Aorta (tissue), 5 donors: ENCODE measurements at regions of chr12 and their contacts with region 1.

Region 1: DNA sequence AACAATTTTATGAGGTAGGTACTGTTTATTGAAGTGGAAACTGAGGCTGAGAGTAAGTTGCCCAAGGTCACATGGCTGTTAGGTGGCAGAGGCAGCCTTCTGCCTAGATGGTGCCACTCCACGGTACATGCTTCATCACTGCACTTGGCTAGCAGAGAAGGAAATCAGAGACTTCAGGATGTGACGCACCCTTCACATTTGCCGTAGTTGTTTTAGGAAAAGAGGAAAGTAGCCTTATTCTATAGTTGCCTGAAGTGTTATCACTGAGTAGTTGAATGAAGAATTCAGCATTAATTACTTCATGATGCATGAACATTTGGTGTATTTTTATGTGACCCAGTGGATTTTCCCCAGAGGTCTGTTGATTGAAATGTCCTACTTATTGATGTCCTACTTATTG is 55.7 kb downstream of the ERC1 start:
- DNase-seq: no peak
- ATAC-seq: no peak
- H3K4me3 ChIP-seq: no peak overlapping the region
- H3K27ac ChIP-seq: no peak overlapping the region
- H3K4me1 ChIP-seq: peaks cover 1 to 7% of the 10 kb centered on the region in 2 donors
- H3K27me3 ChIP-seq: no peaks in the 10 kb centered on the region

Region 2: DNA sequence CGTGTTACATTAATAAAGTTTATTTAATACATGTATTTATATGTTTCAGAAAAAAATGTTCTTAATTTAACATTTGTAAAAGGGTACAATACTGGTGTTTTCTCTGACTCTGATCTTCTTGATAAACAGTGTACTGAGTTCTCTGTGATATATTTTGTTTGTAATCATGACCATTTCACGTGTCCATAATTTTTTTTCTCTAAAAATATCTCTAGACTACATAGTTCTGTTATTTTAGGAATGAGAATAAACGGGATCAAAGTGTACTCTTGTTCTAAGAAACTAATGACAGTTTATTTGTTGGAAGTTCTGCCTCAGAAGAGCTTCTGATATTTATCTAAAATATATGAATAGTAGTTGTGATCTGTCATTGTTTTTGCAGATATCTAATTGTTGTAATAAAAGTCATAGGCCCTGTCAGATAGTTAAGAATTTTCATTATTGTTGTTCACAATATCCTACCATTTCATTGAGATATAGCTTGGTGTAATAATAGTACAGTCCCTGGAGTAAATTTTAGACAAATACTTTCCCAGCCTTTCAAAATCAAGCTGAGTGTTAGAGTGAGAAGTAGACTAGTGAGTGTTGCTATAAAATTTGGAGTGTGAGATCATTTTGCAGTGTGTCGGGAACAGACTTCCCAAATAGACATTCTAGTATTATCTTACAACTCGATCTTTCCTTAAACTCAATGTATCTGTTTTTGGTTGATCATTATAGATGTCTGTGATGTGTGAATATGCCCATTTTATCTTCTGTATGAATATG is 30.5 kb after region 1 on chr12:
- intact Hi-C with region 1: loop called in 1 of 2 experiments (anchors 1 kb)
- DNase-seq: no peak
- ATAC-seq: no peak
- H3K4me3 ChIP-seq: no peak overlapping the region
- H3K27ac ChIP-seq: peak overlapping the region in 1 of 2 donors; percentile 57
- H3K4me1 ChIP-seq: no peaks in the 10 kb centered on the region
- H3K27me3 ChIP-seq: no peaks in the 10 kb centered on the region